Vagina (tissue), 2 donors: ENCODE measurements at regions of chr2 and their contacts with region 1.

Region 1: DNA sequence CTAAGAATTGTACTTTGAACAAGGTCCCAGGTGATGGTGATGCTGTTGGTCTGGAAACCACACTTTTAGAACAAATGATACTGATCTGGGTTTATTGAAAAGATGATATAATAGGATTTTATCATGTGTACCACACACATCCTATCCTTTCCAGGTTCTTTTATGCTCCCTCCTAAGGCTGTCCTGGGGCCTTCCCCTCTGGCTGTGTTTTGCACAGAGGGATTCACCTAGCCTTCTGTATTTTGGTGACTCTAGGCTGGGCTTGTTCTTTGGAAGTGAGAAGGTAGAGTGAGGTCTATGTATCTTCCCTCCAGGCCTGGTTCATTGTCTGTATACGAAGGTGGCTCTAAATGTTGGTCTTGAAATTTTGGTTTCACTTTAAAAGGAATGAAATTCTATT is 12.7 kb downstream of the ANXA4 start:
- DNase-seq: no peak
- H3K4me3 ChIP-seq: no peak overlapping the region
- H3K27ac ChIP-seq: peak overlapping the region; percentile 80
- H3K4me1 ChIP-seq: peaks cover 53% of the 10 kb centered on the region
- H3K27me3 ChIP-seq: no peaks in the 10 kb centered on the region
- CTCF ChIP-seq: no peak
- POLR2A ChIP-seq: no peak

Region 2: DNA sequence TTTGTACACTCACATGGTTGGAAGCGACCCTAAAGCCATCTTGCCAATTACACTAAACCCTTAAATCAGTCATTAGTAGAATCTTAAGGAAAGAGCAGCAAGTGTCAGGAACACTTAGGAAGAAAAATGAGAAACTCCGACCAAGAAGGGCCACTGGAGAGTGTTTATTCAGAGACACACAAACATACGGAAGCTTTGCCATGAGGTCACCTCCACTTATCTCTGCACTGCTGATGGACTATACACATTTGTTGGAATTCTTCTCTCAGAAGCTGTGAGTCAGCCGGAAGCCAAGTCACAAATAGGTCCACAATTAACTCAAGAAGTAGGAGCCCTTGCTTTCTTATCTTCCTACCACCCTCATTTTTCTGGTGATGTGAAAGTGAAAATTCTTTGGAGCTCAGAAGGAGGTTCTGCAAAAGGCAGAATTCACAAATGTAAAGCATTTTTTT is 905.0 kb before region 1 on chr2:
- intact Hi-C with region 1: no loop called
- DNase-seq: no peak
- H3K4me3 ChIP-seq: no peak overlapping the region
- H3K27ac ChIP-seq: no peak overlapping the region
- H3K4me1 ChIP-seq: no peaks in the 10 kb centered on the region
- H3K27me3 ChIP-seq: no peaks in the 10 kb centered on the region
- CTCF ChIP-seq: no peak
- POLR2A ChIP-seq: no peak

Region 3: DNA sequence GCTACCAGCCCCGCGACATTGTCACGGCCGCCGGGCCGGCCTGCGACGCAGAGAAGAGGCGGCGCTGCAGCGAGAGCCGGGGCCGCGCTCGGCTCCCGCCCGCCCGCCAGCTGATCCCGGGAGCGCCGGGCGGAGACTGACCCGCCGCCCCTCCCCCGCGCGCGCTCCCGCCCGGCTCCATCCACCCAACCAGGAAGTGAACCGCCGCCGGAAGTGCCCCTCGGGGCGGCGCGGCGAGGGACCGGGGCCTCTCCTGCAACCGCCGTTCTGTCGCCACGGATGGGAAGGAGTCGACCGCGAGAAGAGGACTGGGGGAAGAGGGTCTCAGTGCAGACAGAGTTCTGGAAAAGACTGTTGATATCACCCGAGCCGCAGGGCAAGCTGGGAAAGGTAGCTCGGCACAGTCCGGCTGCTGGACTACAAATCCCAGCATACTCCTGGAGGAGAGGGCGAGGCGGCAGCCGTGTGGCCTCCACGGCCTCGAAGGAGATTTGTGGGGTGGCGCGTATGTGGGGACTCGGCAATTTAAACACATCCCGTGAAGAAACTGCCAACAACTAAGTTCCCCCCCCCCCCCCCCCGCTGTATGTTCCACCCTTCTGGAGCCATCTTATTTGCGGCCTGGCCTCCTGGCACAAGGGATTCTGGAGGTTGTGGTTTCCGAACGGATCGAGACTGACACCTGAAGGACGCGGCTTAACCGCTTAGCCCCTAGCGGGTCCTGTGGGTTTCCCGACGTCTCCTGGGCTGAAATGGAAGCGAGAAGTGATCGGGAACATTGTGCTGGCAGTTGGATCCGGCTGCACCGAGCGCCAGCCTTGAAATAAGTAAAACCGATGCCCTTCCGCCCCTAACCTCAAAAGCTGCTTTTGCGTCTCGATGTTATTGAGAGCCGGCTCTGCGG is 110.8 kb before region 1 on chr2 and contains the start of gene AAK1:
- intact Hi-C with region 1: no loop called
- DNase-seq: peak in 1 of 2 donors; percentile 97
- H3K4me3 ChIP-seq: peak within 1 kb of the TSS; percentile 70 to 85
- H3K27ac ChIP-seq: peak within 1 kb of the TSS; percentile 92
- H3K4me1 ChIP-seq: peaks cover 44% of the 10 kb centered on the region
- H3K27me3 ChIP-seq: no peaks in the 10 kb centered on the region
- CTCF ChIP-seq: no peak
- POLR2A ChIP-seq: peak in 1 of 2 donors; percentile 83
- total RNA-seq, gene AAK1: 48.6 TPM

Region 4: GRCh38 chr2:69770193-69771146 is 15.8 kb after region 1 on chr2:
- intact Hi-C with region 1: loop called (anchors 1 kb)
- DNase-seq: no peak
- H3K4me3 ChIP-seq: no peak overlapping the region
- H3K27ac ChIP-seq: peak overlapping the region; percentile 91
- H3K4me1 ChIP-seq: peaks cover 79% of the 10 kb centered on the region
- H3K27me3 ChIP-seq: no peaks in the 10 kb centered on the region
- CTCF ChIP-seq: no peak
- POLR2A ChIP-seq: no peak